Activated CD8-positive, alpha-beta T cell treated with anti-CD3 and anti-CD28 coated beads for 36 hours (primary cell): ENCODE measurements at regions of chr10 and their contacts with region 1.

Region 1: DNA sequence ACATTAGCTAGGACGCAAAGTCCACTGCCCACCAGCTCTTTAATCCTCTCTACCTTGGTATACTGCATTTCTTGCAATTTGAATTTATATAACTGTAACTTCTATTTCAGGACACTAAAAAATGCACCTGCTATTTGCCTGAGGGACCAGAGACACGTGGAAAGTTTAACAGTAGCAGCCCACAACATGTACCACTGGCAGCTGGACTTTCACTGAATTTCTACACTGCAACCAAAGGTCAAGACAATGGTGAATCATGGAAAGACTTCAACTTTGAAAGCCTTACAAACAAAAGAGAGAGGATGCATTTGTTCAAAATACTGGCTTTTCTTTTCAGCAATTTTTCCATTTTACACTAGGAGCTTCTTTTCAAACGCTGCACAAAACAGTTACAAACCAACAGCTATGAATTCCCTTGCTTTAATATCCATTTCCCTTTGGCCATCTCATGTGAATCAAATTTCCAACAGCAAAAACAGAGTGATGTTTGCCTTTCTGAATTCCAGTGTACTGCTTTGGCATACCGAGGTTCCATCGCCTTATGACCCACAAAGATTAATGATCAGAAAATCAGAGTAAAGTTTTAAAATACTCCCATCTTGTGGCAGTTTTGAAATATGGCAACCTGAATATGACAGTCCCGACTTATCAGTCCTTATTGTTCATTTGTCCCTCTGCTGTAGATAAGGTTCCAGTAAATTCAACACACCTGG is 29.9 kb upstream of the HNRNPH3 start:
- DNase-seq: no peak
- ATAC-seq: peak; percentile 53
- H3K4me3 Mint-ChIP-seq: no peak overlapping the region
- H3K27ac Mint-ChIP-seq: no peak overlapping the region
- H3K4me1 Mint-ChIP-seq: no peaks in the 10 kb centered on the region
- H3K27me3 Mint-ChIP-seq: no peaks in the 10 kb centered on the region
- CTCF ChIP-seq: peak; percentile 70

Region 2: GRCh38 chr10:68288717-68289116 is 13.2 kb before region 1 on chr10:
- CTCF ChIA-PET with region 1: interaction called, 16 read pairs
- POLR2A ChIA-PET with region 1: no interaction called
- intact Hi-C with region 1: no loop called
- DNase-seq: no peak
- ATAC-seq: no peak
- H3K4me3 Mint-ChIP-seq: no peak overlapping the region
- H3K27ac Mint-ChIP-seq: no peak overlapping the region
- H3K4me1 Mint-ChIP-seq: no peaks in the 10 kb centered on the region
- H3K27me3 Mint-ChIP-seq: no peaks in the 10 kb centered on the region
- CTCF ChIP-seq: no peak

Region 3: DNA sequence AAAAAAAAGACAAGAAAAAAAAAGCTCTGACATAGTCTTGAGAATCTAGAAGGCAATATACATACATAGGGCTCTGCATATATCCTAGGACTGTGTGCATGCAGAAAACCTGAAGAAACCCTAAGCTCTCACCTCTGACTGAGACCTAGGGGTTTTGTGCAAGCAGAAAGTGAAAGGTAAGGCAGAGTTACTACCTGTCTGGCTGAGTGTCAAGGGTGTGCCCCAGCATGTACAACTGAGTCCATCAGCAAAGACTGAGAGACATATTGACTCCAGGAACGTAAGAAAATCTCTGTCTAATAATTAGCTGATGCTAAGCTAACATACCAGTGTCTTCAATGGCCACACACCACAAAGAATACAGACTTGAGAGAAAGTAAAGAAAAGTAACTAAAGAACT is 13.6 kb after region 1 on chr10:
- CTCF ChIA-PET with region 1: interaction called, 23 read pairs
- POLR2A ChIA-PET with region 1: no interaction called
- intact Hi-C with region 1: no loop called
- DNase-seq: no peak
- ATAC-seq: no peak
- H3K4me3 Mint-ChIP-seq: no peak overlapping the region
- H3K27ac Mint-ChIP-seq: peak overlapping the region; percentile 2
- H3K4me1 Mint-ChIP-seq: peaks cover 6% of the 10 kb centered on the region
- H3K27me3 Mint-ChIP-seq: no peaks in the 10 kb centered on the region
- CTCF ChIP-seq: no peak